Endothelial cell of umbilical vein (primary cell): ENCODE measurements at regions of chr14 and their contacts with region 1.

Region 1: DNA sequence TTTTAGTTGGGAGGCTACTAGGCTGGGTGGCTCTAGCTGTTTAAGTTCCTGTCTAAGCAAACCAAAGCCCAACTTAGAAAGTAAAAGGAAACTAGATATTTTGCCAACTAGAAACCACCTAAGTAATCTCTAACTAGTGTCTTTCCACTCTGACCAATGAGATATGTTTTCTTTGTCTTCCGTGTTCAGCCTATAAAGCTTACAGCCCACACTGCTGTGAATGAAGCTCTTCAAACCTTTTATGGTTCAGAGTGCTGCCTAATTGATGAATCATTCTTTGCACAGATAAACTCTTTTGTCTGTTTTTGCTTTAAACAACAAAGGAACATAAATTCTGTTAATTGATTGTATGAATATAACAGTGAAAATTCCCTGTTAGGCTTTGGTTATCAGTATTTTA is 66.1 kb downstream of the FUT8 start:
- DNase-seq: peak; percentile 64
- H3K4me3 ChIP-seq: no peak overlapping the region
- H3K27ac ChIP-seq: peak overlapping the region; percentile 8
- H3K4me1 ChIP-seq: peaks cover 7% of the 10 kb centered on the region
- H3K27me3 ChIP-seq: no peaks in the 10 kb centered on the region
- CTCF ChIP-seq: no peak
- POLR2A ChIP-seq: no peak

Region 2: GRCh38 chr14:65142429-65142828 is 336.2 kb before region 1 on chr14:
- CTCF ChIA-PET with region 1: no interaction called
- POLR2A ChIA-PET with region 1: no interaction called
- dilution Hi-C with region 1: no loop called
- intact Hi-C with region 1: no loop called
- DNase-seq: no peak
- H3K4me3 ChIP-seq: no peak overlapping the region
- H3K27ac ChIP-seq: no peak overlapping the region
- H3K4me1 ChIP-seq: no peaks in the 10 kb centered on the region
- H3K27me3 ChIP-seq: peaks cover 7 to 9% of the 10 kb centered on the region in 2 experiments
- CTCF ChIP-seq: no peak
- POLR2A ChIP-seq: no peak

Region 3: GRCh38 chr14:65594153-65594881 is 115.7 kb after region 1 on chr14:
- CTCF ChIA-PET with region 1: no interaction called
- POLR2A ChIA-PET with region 1: no interaction called
- dilution Hi-C with region 1: no loop called
- intact Hi-C with region 1: no loop called
- DNase-seq: no peak
- H3K4me3 ChIP-seq: no peak overlapping the region
- H3K27ac ChIP-seq: no peak overlapping the region
- H3K4me1 ChIP-seq: no peaks in the 10 kb centered on the region
- H3K27me3 ChIP-seq: no peaks in the 10 kb centered on the region
- CTCF ChIP-seq: no peak
- POLR2A ChIP-seq: no peak

Region 4: GRCh38 chr14:65613131-65613650 is 134.6 kb after region 1 on chr14:
- CTCF ChIA-PET with region 1: no interaction called
- POLR2A ChIA-PET with region 1: no interaction called
- dilution Hi-C with region 1: no loop called
- intact Hi-C with region 1: loop called (anchors 5 kb)
- DNase-seq: no peak
- H3K4me3 ChIP-seq: no peak overlapping the region
- H3K27ac ChIP-seq: no peak overlapping the region
- H3K4me1 ChIP-seq: no peaks in the 10 kb centered on the region
- H3K27me3 ChIP-seq: no peaks in the 10 kb centered on the region
- CTCF ChIP-seq: no peak
- POLR2A ChIP-seq: no peak